HepG2 (cell line): ENCODE measurements at regions of chr15 and their contacts with region 1.

Region 1: DNA sequence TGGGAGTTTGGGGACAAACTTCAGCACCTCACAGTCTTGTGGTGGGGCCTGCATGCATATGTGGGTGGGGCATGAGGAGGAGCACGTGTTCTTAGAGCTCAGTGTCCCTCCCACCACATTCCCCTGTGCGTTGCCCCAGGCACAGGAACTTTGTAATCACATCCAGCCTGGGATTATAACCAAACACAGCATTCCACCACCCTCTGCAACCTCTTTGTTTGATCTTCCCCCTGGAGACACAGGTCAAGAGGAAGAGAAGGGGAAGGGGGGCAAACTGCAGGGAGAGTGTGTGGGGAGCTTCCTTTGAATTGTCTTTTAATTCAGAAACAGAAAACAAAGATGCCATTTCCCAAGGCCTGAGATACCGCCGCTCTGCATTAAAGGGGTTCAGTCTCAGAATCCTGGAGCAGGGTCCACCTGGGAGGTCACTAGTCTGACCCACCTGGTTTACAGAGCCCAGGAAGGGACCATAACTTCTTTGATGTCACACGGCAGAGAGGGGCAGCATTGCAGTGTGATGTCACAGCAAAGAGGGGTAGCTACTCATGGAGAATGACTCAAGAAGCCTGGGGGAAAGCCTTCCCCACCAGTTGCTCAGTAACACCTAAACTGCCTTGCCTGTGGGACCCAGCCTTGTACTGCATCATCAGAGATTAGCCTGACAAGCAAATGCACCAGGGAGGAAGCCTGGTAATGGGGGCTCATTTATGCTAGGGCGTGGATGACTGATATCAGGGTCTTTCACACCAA is 106.3 kb upstream of the RNU6-1 start:
- DNase-seq: peak; percentile 98
- ATAC-seq: peak; percentile 96
- H3K4me3 ChIP-seq: peak overlapping the region; percentile 69 to 79 (median 79)
- H3K27ac ChIP-seq: peak overlapping the region; percentile 98
- H3K4me1 ChIP-seq: peaks cover 61% of the 10 kb centered on the region
- H3K27me3 ChIP-seq: no peaks in the 10 kb centered on the region; a peak in 1 of 5 replicates
- CTCF ChIP-seq: 0 out of 2 replicates have a peak, but pooled peaks have one; percentile 6
- EP300 ChIP-seq: peak; percentile 37 to 88; a peak in 3 of 4 replicates
- POLR2A ChIP-seq: peak; percentile 64 to 68
- RAD21 ChIP-seq: no peak

Region 2: GRCh38 chr15:67863442-67863987 is 82.6 kb before region 1 on chr15:
- CTCF ChIA-PET with region 1: interaction called, 4 read pairs
- POLR2A ChIA-PET with region 1: interaction called, 3 read pairs
- in situ Hi-C with region 1: loop called (anchors 5 kb)
- intact Hi-C with region 1: loop called (anchors 1 kb)
- DNase-seq: peak; percentile 66
- ATAC-seq: peak; percentile 98
- H3K4me3 ChIP-seq: peak overlapping the region; percentile 41 to 74 (median 46); a peak in 5 of 6 replicates
- H3K27ac ChIP-seq: peak overlapping the region; percentile 53
- H3K4me1 ChIP-seq: peaks cover 34% of the 10 kb centered on the region
- H3K27me3 ChIP-seq: no peaks in the 10 kb centered on the region
- CTCF ChIP-seq: peak; percentile 97
- EP300 ChIP-seq: 0 out of 4 replicates have a peak, but pooled peaks of 1 of the 2 experiments have one; percentile 19
- POLR2A ChIP-seq: no peak; a peak in 1 of 4 replicates
- RAD21 ChIP-seq: peak; percentile 99

Region 3: GRCh38 chr15:67884514-67885487 is 61.3 kb before region 1 on chr15:
- CTCF ChIA-PET with region 1: no interaction called
- POLR2A ChIA-PET with region 1: interaction called, 24 read pairs
- in situ Hi-C with region 1: no loop called
- intact Hi-C with region 1: loop called (anchors 5 kb)
- DNase-seq: peak; percentile 89
- ATAC-seq: peak; percentile 96
- H3K4me3 ChIP-seq: peak overlapping the region; percentile 43 to 60 (median 54); a peak in 5 of 6 replicates
- H3K27ac ChIP-seq: peak overlapping the region; percentile 81
- H3K4me1 ChIP-seq: peaks cover 60% of the 10 kb centered on the region
- H3K27me3 ChIP-seq: no peaks in the 10 kb centered on the region
- CTCF ChIP-seq: no peak
- EP300 ChIP-seq: peak; percentile 70 to 93; a peak in 3 of 4 replicates
- POLR2A ChIP-seq: peak; percentile 47 to 52; a peak in 3 of 4 replicates
- RAD21 ChIP-seq: no peak; the same call in 1 of the 2 replicates

Region 4: DNA sequence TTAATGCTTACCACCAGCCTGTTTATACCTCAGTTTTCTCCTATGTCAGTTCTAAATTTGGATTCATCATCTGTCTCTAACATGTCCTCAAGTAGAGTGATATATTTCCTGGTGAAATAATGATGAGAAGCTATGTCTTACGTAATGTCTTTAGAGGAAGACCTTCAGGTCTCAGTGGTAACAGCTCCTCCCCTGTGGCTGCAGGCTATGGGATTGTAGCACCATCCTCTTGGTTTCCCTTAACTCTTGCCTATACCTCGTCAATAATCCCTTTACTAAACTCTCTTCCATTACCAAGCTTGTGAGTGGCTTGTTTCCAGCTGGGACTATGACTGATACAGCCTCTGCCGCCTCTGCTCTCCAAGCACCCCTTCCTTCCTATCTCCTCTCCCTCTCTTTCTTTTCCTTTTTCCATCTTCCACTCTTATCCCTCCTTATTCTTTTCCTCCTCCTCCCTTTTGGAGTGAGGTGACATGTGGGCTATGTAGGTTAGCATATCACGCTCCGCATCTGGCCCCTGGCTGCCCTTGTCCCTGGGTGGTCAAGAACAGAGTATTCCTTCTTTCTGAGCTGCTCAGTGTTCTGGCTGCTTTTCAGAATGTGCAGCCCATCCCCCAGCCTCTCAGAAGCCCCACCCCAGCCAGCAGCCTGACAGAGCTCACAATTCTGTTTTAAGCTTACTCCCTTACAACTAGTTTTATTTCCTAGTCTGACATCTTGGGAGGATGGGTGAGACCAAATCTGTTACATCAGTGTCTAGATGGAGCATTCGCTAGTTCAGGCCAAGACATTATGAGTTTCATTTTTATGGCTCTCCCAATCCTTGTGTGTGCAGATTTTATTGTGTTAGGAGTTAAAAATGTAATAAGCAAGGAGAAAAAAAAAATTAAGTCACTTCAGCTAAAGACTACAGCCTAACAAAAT is 31.3 kb before region 1 on chr15:
- CTCF ChIA-PET with region 1: no interaction called
- POLR2A ChIA-PET with region 1: interaction called, 63 read pairs
- in situ Hi-C with region 1: no loop called
- intact Hi-C with region 1: loop called (anchors 2 kb)
- DNase-seq: peak; percentile 65
- ATAC-seq: peak; percentile 73
- H3K4me3 ChIP-seq: peak overlapping the region; percentile 19 to 51 (median 35)
- H3K27ac ChIP-seq: peak overlapping the region; percentile 89
- H3K4me1 ChIP-seq: peaks cover 75% of the 10 kb centered on the region
- H3K27me3 ChIP-seq: no peaks in the 10 kb centered on the region
- CTCF ChIP-seq: no peak
- EP300 ChIP-seq: no peak
- POLR2A ChIP-seq: no peak; a peak in 1 of 4 replicates
- RAD21 ChIP-seq: no peak

Region 5: DNA sequence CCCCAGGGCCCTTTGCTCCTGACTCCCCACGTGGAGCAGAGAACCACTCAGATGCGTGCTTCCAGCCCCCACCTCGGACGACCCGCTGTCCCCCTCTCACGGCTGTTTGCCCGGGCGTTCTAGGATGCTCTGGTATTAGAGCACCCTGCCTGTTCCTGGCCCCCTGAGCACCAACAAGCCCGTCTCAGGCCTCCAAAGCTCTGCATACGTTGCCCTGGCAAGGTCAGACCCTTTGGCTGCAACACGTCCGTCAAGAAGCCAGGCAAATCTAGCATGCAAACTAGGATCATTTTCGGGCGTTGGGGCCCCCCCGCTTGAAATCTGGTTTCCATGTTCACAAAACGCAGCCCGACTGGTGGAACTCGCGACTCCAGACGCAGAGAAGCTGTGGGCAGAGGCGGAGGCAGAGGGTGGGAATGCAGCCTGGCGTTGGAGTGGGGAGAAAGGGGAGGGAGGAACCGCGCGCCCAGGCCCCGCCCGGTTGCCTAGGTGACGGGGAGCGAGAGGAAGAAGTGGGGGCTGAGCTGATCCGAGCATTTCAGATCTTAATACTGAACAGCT is 21.8 kb after region 1 on chr15:
- CTCF ChIA-PET with region 1: no interaction called
- POLR2A ChIA-PET with region 1: interaction called, 23 read pairs
- in situ Hi-C with region 1: no loop called
- intact Hi-C with region 1: no loop called
- DNase-seq: no peak
- ATAC-seq: no peak
- H3K4me3 ChIP-seq: no peak overlapping the region
- H3K27ac ChIP-seq: no peak overlapping the region
- H3K4me1 ChIP-seq: peaks cover 12% of the 10 kb centered on the region
- H3K27me3 ChIP-seq: no peaks in the 10 kb centered on the region
- CTCF ChIP-seq: no peak
- EP300 ChIP-seq: no peak
- POLR2A ChIP-seq: no peak
- RAD21 ChIP-seq: no peak

Region 6: GRCh38 chr15:67980773-67981685 is 34.9 kb after region 1 on chr15:
- CTCF ChIA-PET with region 1: no interaction called
- POLR2A ChIA-PET with region 1: no interaction called
- in situ Hi-C with region 1: no loop called
- intact Hi-C with region 1: no loop called
- DNase-seq: no peak
- ATAC-seq: no peak
- H3K4me3 ChIP-seq: no peak overlapping the region
- H3K27ac ChIP-seq: no peak overlapping the region
- H3K4me1 ChIP-seq: no peaks in the 10 kb centered on the region
- H3K27me3 ChIP-seq: no peaks in the 10 kb centered on the region
- CTCF ChIP-seq: no peak
- EP300 ChIP-seq: no peak
- POLR2A ChIP-seq: no peak
- RAD21 ChIP-seq: no peak